OCI-LY7 (cell line): ENCODE measurements at regions of chr6 and their contacts with region 1.

Region 1: GRCh38 chr6:90369024-90369519 is 72.4 kb upstream of the BACH2 start:
- DNase-seq: no peak
- H3K4me3 ChIP-seq: no peak overlapping the region
- H3K27ac ChIP-seq: no peak overlapping the region
- H3K4me1 ChIP-seq: peaks cover 56% of the 10 kb centered on the region
- CTCF ChIP-seq: no peak

Region 2: DNA sequence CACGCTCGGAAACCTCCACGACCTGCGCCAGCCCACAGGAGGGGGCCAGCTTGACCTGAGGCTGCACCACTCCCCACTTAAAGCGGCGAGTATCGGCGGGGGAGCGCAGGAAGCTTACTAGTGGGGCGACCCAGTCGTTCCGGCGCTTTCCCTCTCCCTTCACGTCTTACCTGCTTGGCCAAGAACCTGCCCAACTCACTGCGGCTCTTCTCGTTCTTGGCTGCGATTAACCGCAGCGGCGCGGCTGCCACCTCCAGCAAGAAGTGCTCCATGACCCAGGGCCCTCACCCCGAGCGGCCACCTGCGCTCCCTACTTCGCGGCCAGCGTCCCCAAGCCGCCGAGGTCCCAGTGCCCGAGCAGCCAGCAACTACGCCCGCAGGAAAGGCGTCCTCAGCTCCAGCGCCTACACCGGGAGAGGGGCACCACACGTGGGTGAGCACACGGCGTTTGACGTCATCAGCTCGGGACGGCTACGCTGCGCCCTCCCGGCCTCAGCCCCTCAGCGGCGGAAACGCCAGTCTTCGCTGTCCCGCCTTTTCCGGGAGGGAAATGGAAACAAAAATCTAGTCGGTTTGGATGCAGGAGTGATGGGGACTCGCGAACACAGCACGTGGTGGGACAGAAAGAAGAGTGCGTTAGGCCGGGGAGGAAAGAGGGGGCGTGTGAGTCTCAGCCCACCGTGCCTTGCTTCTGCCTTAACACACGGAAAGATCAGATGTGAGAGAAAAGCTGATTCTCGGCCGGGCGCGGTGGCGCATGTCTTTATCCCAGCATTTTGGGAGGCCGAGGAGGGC is 549.5 kb before region 1 on chr6 and contains the start of gene MDN1:
- CTCF ChIA-PET with region 1: no interaction called
- POLR2A ChIA-PET with region 1: no interaction called
- intact Hi-C with region 1: no loop called
- DNase-seq: peak; percentile 97
- H3K4me3 ChIP-seq: peak within 1 kb of the TSS; percentile 87
- H3K27ac ChIP-seq: peak within 1 kb of the TSS; percentile 62
- H3K4me1 ChIP-seq: peaks cover 29% of the 10 kb centered on the region
- CTCF ChIP-seq: no peak
- total RNA-seq, gene MDN1: 42.9 and 48.6 TPM in 2 replicates

Region 3: GRCh38 chr6:90383196-90383822 is 14.2 kb after region 1 on chr6:
- CTCF ChIA-PET with region 1: interaction called, 3 read pairs
- POLR2A ChIA-PET with region 1: interaction called, 39 read pairs
- intact Hi-C with region 1: no loop called
- DNase-seq: peak; percentile 89
- H3K4me3 ChIP-seq: peak overlapping the region; percentile 59
- H3K27ac ChIP-seq: peak overlapping the region; percentile 97
- H3K4me1 ChIP-seq: peaks cover 97% of the 10 kb centered on the region
- CTCF ChIP-seq: no peak

Region 4: GRCh38 chr6:90399970-90400369 is 30.9 kb after region 1 on chr6:
- CTCF ChIA-PET with region 1: no interaction called
- POLR2A ChIA-PET with region 1: no interaction called
- intact Hi-C with region 1: no loop called
- DNase-seq: no peak
- H3K4me3 ChIP-seq: no peak overlapping the region
- H3K27ac ChIP-seq: no peak overlapping the region
- H3K4me1 ChIP-seq: peaks cover 26% of the 10 kb centered on the region
- CTCF ChIP-seq: no peak